ENCODE measurements at regions of chr4 and their contacts with region 1.

Region 1: GRCh38 chr4:63851496-63851895 is 557.8 kb downstream of the TECRL start:
- DNase-seq: no peak
- ATAC-seq: no peak
- H3K4me3 ChIP-seq: no peak overlapping the region
- H3K27ac ChIP-seq: no peak overlapping the region
- H3K4me1 ChIP-seq: no peaks in the 10 kb centered on the region
- H3K27me3 ChIP-seq: no peaks in the 10 kb centered on the region
- CTCF ChIP-seq: no peak
- EP300 ChIP-seq: no peak
- POLR2A ChIP-seq: no peak
- RAD21 ChIP-seq: no peak

Region 2: DNA sequence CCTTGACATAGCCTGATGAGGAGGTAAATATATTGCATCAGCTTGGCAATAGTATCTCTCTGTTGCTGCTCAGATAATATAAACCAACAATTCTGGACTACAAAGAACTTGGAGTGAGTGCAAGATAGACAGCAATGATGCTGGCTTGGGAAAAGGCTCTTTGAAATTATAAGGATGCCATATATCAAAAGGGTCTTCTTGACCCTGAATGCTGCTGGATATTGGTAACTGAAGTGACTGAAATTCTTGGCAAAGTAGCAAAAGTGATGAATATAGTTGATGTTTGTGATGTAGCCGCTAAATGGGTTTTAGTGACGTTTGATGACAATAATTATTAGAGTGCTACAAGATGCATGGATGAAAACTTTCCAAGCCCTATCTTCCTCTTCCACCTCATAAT is 1259.7 kb before region 1 on chr4:
- CTCF ChIA-PET with region 1: no interaction called
- POLR2A ChIA-PET with region 1: no interaction called
- in situ Hi-C with region 1: no loop called
- intact Hi-C with region 1: loop called (anchors 10 kb)
- DNase-seq: no peak
- ATAC-seq: no peak
- H3K4me3 ChIP-seq: no peak overlapping the region
- H3K27ac ChIP-seq: no peak overlapping the region
- H3K4me1 ChIP-seq: no peaks in the 10 kb centered on the region
- H3K27me3 ChIP-seq: no peaks in the 10 kb centered on the region
- CTCF ChIP-seq: no peak
- EP300 ChIP-seq: no peak
- POLR2A ChIP-seq: no peak
- RAD21 ChIP-seq: no peak

Region 3: DNA sequence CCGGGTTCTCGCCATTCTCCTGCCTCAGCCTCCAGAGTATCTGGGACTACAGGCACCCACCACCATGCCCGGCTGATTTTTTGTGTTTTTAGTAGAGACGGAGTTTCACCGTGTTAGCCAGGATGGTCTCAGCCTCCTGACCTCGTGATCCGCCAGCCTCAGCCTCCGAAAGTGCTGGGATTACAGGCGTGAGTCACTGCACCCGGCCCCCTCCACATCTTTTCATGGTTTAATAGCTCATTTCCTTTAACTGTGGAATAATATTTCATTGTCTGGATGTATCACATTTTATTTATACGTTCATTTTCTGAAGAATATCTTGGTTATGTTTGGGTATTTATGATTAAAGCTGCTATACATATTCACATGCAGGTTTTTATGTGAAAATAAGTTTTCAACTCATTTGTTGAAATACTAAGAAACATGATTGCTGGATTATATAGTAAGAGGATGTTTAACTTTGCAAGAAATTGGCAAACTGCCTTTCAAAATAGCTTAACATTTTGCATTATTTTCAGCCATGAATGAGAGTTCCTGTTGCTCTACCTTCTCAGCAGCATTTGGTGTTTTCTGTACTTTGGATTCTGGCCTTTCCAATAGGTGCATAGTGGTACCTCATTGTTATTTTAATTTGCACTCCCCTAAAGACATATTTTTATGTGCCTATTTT is 34.2 kb before region 1 on chr4:
- CTCF ChIA-PET with region 1: no interaction called
- POLR2A ChIA-PET with region 1: no interaction called
- in situ Hi-C with region 1: no loop called
- intact Hi-C with region 1: loop called (anchors 5 kb)
- DNase-seq: no peak
- ATAC-seq: no peak
- H3K4me3 ChIP-seq: no peak overlapping the region
- H3K27ac ChIP-seq: no peak overlapping the region
- H3K4me1 ChIP-seq: no peaks in the 10 kb centered on the region
- H3K27me3 ChIP-seq: no peaks in the 10 kb centered on the region
- CTCF ChIP-seq: no peak
- EP300 ChIP-seq: no peak
- POLR2A ChIP-seq: no peak
- RAD21 ChIP-seq: no peak

Region 4: DNA sequence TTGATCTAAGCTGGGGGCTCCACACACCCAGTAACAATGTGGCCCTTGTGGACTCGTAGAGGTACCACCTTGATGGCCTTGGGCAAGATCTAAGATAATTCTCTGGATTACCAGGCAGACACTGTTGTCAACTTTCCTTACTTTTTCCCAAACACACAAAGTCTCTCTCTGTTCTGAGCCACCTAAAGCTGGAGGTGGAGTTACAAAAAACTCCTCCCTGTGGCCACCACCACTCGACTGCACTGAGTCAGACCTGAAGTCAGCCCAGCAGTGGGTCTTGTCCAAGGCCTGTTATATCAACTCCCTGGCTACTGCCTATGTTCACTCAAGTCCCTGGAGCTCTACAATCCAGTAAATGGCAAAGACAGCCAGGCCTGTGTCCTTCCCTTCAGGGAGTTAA is 627.8 kb after region 1 on chr4:
- CTCF ChIA-PET with region 1: no interaction called
- POLR2A ChIA-PET with region 1: no interaction called
- in situ Hi-C with region 1: no loop called
- intact Hi-C with region 1: no loop called
- DNase-seq: no peak
- ATAC-seq: no peak
- H3K4me3 ChIP-seq: no peak overlapping the region
- H3K27ac ChIP-seq: no peak overlapping the region
- H3K4me1 ChIP-seq: no peaks in the 10 kb centered on the region
- H3K27me3 ChIP-seq: no peaks in the 10 kb centered on the region
- CTCF ChIP-seq: no peak
- EP300 ChIP-seq: no peak
- POLR2A ChIP-seq: no peak
- RAD21 ChIP-seq: no peak

Measured in K562 (cell line).